ENCODE measurements at regions of chr19 and their contacts with region 1.

Region 1: GRCh38 chr19:2475702-2476450 is at the start of gene GADD45B:
- DNase-seq: peak; percentile 99
- total RNA-seq, gene GADD45B: 120 to 160 TPM

Region 2: GRCh38 chr19:2543463-2544442 is 67.9 kb after region 1 on chr19:
- intact Hi-C with region 1: loop called in 1 of 2 experiments (anchors 5 kb)
- DNase-seq: peak; percentile 99

Region 3: GRCh38 chr19:2578901-2579677 is 103.2 kb after region 1 on chr19:
- intact Hi-C with region 1: loop called (anchors 2 to 10 kb)
- DNase-seq: peak; percentile 96

Region 4: DNA sequence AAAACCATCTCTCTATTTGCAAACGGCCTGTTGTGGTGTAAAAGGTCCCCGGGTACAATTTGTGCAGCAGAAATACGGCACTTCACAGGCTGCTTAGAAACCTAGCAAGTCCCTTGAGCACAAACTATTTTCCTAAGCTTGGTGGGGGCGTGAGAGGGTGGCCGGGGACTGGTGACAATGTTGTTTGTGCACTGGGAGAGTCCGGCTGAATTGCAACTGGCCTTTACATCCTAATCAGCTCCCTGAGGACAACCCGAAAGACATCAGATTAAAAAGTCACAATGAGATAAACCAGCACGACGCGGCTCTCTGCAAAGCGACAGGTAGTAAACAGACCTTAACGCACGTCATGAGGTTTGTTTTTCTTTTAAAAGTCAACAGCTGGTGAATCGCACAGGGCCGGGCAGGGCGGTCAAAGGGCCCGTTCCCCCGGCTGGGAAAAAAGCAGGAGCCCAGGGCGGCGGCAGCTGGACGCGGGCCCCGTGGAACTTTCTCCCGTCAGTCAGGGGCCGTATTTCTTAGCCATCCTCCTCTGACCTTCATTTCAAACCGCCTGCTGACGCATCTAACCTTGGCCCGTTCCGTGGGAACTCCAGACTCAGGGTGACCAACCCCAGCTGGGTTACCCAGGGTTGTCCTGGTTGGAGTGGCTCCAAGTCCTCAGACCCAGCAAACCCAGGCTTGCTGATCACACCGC is 112.4 kb after region 1 on chr19:
- intact Hi-C with region 1: loop called in 1 of 2 experiments (anchors 10 kb)
- DNase-seq: peak; percentile 93

Region 5: DNA sequence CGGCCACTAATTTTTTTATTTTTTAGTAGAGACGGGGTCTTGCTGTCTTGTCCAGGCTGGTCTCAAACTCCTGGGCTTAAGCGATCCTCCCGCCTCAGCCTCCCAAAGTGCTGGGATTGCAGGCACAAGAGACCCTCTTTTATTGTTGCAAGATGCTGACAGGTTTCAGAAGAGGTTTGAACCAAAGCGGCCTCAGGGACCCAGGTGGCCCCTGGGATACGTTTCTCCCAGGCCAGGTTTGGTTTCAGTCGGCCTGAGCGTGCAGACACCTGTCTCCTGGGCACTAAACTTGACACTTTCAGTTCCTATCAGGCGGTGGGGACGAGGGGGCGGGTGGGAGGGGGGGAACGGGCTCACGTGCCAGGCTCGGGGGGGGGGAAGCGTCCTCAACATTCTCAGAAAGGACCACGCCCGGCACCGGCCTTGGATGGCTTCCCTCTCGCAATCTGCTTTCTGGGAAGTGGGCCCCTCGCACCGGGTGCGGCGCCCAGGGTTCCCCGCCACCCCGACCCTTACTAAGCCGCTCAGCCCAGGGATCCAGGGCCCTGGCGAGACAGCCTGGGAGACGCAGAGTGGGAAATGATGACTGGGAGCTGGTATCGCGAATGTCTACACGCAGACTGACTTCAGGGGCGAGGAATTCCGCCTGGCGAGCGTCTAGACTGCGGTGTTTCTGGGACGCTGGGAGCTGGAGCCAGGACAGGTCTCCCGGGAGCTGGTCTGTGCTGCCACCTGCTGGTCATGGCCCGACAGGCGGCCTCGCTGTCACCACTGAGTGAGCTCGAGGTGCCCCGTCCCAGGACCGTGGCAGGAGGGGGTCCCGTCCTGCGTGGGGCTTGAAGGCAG is 135.0 kb after region 1 on chr19:
- intact Hi-C with region 1: loop called (anchors 2 to 5 kb)
- DNase-seq: peak; percentile 97

Region 6: GRCh38 chr19:2770055-2771013 is 294.5 kb after region 1 on chr19:
- intact Hi-C with region 1: no loop called
- DNase-seq: no peak